GM18951 (cell line): ENCODE measurements at regions of chr3 and their contacts with region 1.

Region 1: GRCh38 chr3:123028233-123028828 is 768 bp upstream of the SEMA5B start:
- POLR2A ChIP-seq: no peak

Region 2: GRCh38 chr3:122415720-122416654 is 612.3 kb before region 1 on chr3 and contains the start of gene WDR5B:
- in situ Hi-C with region 1: loop called (anchors 25 kb)
- POLR2A ChIP-seq: peak; percentile 90

Region 3: GRCh38 chr3:122533931-122534334 is 494.4 kb before region 1 on chr3:
- in situ Hi-C with region 1: loop called (anchors 25 kb)
- POLR2A ChIP-seq: no peak

Region 4: GRCh38 chr3:122621112-122621511 is 407.2 kb before region 1 on chr3:
- in situ Hi-C with region 1: no loop called
- POLR2A ChIP-seq: no peak

Region 5: GRCh38 chr3:123096731-123097130 is 68.4 kb after region 1 on chr3:
- in situ Hi-C with region 1: no loop called
- POLR2A ChIP-seq: no peak